Heart right ventricle (tissue), 16 donors: ENCODE measurements at regions of chr5 and their contacts with region 1.

Region 1: DNA sequence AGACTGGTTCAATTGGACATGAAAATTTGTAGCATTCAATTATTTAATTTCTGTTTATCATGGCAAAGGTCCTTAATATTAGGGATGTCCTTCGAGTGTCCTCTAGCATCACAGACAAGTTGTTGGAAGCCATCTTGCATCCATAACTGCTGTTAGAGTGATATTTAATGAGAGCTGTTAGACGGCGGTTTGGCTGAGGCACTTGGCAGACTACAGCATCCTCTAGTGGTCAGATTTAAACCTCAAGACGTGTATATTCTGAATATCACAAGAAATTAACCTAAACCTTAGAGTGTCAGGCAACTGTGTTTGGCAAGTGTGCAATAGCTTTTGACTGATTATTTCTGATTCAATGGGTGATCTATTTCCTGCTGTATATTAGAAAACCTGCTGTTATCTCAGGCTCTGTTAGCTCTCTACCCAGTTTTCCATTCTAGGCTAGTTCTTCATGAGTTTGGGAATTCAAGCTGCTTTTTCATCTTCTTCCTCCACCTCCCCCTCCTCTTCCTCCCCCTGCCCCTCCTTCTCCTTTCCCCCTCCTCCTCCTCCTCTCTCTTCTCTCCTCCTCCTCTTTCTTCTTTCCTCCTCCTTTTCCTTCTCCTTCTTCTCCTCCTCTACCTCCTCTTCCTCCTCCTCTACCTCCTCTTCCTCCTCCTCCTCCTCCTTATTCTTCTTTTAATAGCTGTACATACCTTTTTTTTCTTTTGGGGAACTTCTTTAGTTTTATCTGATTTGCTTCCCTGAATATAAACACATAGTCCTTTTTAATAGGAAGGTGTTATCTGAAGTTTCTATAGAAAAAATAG is 8.6 kb downstream of the SPINK1 start:
- DNase-seq: peak in 1 of 2 donors; percentile 26
- ATAC-seq: peak in 5 of 8 donors; percentile 66 to 83 (median 76)
- H3K4me3 ChIP-seq: no peak overlapping the region
- H3K27ac ChIP-seq: no peak overlapping the region
- H3K4me1 ChIP-seq: no peaks in the 10 kb centered on the region
- H3K27me3 ChIP-seq: peaks cover 0 to 19% (median 0%) of the 10 kb centered on the region in 7 donors
- CTCF ChIP-seq: peak; percentile 59 to 90 (median 76)

Region 2: DNA sequence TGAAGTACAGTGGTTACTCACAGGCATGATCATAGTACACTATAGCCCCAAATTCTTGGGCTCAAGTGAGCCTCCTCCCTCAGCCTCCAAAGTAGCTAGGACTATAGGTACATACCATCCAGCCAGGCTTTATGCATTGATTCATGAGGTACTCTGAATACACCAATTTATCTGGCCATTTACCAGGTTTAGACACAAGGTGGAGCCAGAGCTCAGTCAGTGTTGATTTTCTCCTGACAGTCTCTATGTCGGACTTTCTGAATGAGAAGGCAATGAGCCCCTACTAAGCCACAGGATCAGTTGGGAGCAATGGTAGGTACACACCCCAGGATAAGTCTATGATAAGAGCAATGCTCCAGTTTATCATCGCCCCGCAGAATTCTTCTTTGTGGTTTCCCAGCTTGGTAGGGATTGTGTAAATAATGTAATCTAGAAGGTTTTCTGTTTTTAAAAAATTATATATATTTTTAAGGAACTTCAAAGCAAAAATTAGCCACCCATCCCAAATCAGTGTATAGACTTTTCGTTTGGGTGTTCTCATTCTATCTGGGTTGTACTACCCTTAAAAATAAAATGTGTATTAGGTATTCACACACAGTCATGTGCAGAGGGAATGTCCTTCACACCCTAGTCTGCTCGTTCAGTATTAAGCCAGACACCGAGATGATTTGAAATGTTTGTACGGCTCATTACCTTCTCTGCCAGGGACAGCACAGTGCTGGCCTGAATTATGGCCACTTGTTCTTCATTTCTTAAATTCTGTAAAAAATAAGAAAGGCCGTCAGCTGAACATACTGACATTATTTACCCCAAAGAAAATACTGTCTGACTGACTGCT is 194.6 kb before region 1 on chr5:
- intact Hi-C with region 1: loop called (anchors 1 to 5 kb)
- DNase-seq: peak in 1 of 2 donors; percentile 62
- ATAC-seq: peak; percentile 47 to 87 (median 63)
- H3K4me3 ChIP-seq: no peak overlapping the region
- H3K27ac ChIP-seq: no peak overlapping the region
- H3K4me1 ChIP-seq: no peaks in the 10 kb centered on the region
- H3K27me3 ChIP-seq: peaks cover 0 to 14% (median 0%) of the 10 kb centered on the region in 7 donors
- CTCF ChIP-seq: peak; percentile 50 to 82 (median 74)

Region 3: DNA sequence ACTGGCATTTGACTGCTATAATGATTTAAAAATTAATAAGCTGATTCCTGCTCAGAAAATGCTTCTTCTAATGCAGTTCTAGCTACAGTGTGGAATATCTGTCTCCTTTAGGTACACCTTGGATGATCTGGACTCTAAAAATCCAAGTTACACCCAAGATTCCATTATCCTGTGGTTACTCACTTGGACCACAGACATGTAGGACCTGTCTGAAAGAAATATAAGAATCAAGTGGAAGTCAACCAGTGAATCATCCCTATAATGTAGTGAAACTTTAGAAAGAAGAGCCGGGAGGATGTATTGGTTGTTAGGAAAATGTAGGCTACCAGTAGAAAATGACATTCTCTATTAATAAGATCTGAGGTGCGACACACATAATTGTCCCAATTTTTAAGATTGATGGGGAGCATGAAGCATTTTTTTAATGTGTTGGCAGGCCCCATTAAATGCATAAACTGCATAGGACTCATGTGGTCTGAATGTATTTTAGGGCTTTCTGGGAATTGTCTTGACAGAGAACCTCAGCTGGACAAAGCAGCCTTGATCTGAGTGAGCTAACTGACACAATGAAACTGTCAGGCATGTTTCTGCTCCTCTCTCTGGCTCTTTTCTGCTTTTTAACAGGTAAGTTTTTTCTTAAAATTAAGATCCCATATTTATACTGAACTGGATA is 379.8 kb after region 1 on chr5 and contains the start of gene SPINK6:
- intact Hi-C with region 1: loop called in 1 of 10 experiments (anchors 5 kb)
- DNase-seq: no peak
- ATAC-seq: no peak
- H3K4me3 ChIP-seq: no peak within 1 kb of the TSS
- H3K27ac ChIP-seq: no peak within 1 kb of the TSS
- H3K4me1 ChIP-seq: peaks cover 0 to 16% (median 0%) of the 10 kb centered on the region in 9 donors
- H3K27me3 ChIP-seq: no peaks in the 10 kb centered on the region
- CTCF ChIP-seq: no peak
- total RNA-seq, gene SPINK6: not detected